RWPE1 (cell line): ENCODE measurements at regions of chr6 and their contacts with region 1.

Region 1: DNA sequence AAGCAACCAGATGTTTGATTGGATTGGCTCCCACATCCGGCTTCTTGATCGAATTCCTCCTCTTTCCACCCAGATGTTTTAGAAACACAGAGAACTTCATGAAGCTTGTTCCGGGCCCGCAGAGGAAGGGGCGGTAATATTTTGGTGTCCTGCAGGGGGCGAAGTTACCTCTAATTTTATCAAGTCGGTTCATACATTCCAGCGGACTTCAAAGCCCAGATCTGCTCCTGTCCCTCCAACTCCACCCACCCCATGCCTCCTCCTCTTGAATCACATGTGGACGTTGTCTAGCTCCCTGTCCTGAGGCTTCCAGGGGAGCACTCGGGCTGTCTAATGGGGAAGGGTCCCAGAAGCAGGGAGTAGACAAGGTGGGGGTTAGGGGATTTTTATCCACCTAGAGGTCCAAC is 2.9 kb upstream of the BMP6 start:
- DNase-seq: peak; percentile 46
- H3K27ac ChIP-seq: no peak overlapping the region
- CTCF ChIP-seq: peak; percentile 46

Region 2: DNA sequence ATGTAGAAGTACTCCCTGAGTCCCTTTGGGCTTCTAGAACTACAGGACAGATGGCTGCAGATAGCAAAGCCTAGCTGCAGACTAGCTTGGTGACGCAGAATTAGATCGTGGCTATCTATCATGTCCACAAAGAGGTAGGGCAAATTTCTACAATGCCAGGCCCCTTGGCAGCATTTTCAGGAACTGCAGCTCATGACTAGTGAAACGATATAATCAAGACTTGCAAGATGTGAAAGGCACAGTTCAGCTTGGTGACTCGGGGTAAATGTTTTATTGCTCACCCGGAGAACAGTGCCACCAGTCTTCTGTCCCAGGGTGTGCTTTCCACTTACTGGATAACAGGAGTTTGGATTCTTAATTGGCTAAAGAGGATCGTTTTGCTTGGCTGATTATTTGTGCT is 1243.3 kb before region 1 on chr6:
- CTCF ChIA-PET with region 1: no interaction called
- POLR2A ChIA-PET with region 1: no interaction called
- DNase-seq: no peak
- H3K27ac ChIP-seq: no peak overlapping the region
- CTCF ChIP-seq: no peak

Region 3: GRCh38 chr6:7813704-7814103 is 90.7 kb after region 1 on chr6:
- CTCF ChIA-PET with region 1: interaction called, 4 read pairs
- POLR2A ChIA-PET with region 1: interaction called, 17 read pairs
- DNase-seq: no peak
- H3K27ac ChIP-seq: no peak overlapping the region
- CTCF ChIP-seq: no peak